Naive thymus-derived CD4-positive, alpha-beta T cell (primary cell): ENCODE measurements at regions of chr16 and their contacts with region 1.

Region 1: GRCh38 chr16:82229796-82230619 is 60.0 kb upstream of the MPHOSPH6 start:
- DNase-seq: peak; percentile 14 to 64 (median 35)
- ATAC-seq: peak; percentile 56
- H3K4me3 ChIP-seq: no peak overlapping the region
- H3K4me3 Mint-ChIP-seq: no peak overlapping the region
- H3K27ac ChIP-seq: no peak overlapping the region
- H3K27ac Mint-ChIP-seq: peak overlapping the region in 1 of 9 donors; percentile 1
- H3K4me1 ChIP-seq: no peaks in the 10 kb centered on the region
- H3K4me1 Mint-ChIP-seq: peaks cover 0 to 4% (median 0%) of the 10 kb centered on the region in 7 donors
- H3K27me3 ChIP-seq: no peaks in the 10 kb centered on the region
- H3K27me3 Mint-ChIP-seq: peaks cover 9 to 24% (median 22%) of the 10 kb centered on the region in 5 donors

Region 2: DNA sequence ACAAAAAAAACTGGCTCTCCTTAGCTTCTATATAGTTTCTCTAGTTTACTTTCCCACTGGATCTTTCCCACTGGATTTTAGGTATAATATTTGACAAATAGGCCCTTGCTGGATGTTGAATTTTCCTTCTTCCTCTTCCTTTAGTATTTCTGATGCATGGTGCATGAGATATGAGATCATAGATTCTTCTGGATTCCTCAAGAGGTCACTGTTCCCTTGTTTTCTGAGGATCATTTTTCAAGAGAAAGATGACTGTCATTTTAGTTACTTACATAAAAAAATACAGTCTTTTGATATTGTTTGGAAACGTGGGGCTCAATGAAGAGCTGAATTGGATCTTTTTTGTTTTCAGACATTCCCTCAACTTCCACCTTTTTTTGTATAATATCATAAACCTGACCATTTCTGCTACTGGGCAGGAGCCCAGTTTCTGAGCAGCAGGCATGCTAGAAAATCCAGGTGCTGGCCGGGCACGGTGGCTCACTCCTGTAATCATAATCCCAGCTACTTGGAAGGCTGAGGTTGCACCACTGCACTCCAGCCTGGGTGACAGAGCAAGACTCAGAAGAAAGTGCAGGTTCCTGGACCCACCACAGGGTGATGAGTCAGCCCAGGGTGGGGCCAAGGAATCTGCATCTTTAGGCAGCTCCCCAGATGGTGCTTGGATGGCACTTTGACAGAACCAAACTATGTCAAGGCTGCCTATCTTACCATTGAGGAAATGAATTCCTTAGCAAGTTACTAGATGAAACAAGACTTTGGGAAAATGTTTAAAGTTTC is 289.0 kb before region 1 on chr16:
- CTCF ChIA-PET with region 1: interaction called, 6 read pairs
- POLR2A ChIA-PET with region 1: no interaction called
- intact Hi-C with region 1: loop called in 1 of 2 experiments (anchors 1 kb)
- DNase-seq: peak in 6 of 9 donors; percentile 8 to 45 (median 20)
- ATAC-seq: no peak
- H3K4me3 ChIP-seq: no peak overlapping the region
- H3K4me3 Mint-ChIP-seq: no peak overlapping the region
- H3K27ac ChIP-seq: no peak overlapping the region
- H3K27ac Mint-ChIP-seq: peak overlapping the region in 2 of 9 donors; percentile 0
- H3K4me1 ChIP-seq: no peaks in the 10 kb centered on the region
- H3K4me1 Mint-ChIP-seq: peaks cover 0 to 3% (median 0%) of the 10 kb centered on the region in 7 donors
- H3K27me3 ChIP-seq: no peaks in the 10 kb centered on the region
- H3K27me3 Mint-ChIP-seq: peaks cover 0 to 15% (median 2%) of the 10 kb centered on the region in 5 donors

Region 3: DNA sequence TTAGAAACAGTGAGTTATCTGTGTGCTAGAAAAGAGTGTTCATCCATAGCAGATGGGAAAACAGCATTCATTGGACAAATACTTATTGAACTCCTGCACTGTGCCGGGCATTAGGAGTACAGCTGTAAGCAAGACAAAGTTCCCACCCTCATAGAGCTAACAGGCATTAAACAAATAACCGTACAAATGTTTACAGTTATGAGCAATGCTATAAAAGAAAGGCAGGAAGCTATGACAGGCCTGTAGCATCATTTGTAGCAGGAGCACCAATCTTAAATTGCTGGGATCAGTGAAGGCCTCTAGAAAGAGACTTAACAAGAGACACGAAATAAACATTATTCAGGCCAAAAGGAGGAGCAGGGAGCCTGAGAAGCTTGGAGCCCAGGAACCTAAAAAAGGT is 234.4 kb before region 1 on chr16:
- CTCF ChIA-PET with region 1: no interaction called
- POLR2A ChIA-PET with region 1: no interaction called
- intact Hi-C with region 1: loop called in 1 of 2 experiments (anchors 1 kb)
- DNase-seq: no peak
- ATAC-seq: no peak
- H3K4me3 ChIP-seq: no peak overlapping the region
- H3K4me3 Mint-ChIP-seq: no peak overlapping the region
- H3K27ac ChIP-seq: no peak overlapping the region
- H3K27ac Mint-ChIP-seq: peak overlapping the region in 1 of 9 donors; percentile 10
- H3K4me1 ChIP-seq: no peaks in the 10 kb centered on the region
- H3K4me1 Mint-ChIP-seq: peaks cover 0 to 15% (median 0%) of the 10 kb centered on the region in 7 donors
- H3K27me3 ChIP-seq: no peaks in the 10 kb centered on the region
- H3K27me3 Mint-ChIP-seq: no peaks in the 10 kb centered on the region

Region 4: DNA sequence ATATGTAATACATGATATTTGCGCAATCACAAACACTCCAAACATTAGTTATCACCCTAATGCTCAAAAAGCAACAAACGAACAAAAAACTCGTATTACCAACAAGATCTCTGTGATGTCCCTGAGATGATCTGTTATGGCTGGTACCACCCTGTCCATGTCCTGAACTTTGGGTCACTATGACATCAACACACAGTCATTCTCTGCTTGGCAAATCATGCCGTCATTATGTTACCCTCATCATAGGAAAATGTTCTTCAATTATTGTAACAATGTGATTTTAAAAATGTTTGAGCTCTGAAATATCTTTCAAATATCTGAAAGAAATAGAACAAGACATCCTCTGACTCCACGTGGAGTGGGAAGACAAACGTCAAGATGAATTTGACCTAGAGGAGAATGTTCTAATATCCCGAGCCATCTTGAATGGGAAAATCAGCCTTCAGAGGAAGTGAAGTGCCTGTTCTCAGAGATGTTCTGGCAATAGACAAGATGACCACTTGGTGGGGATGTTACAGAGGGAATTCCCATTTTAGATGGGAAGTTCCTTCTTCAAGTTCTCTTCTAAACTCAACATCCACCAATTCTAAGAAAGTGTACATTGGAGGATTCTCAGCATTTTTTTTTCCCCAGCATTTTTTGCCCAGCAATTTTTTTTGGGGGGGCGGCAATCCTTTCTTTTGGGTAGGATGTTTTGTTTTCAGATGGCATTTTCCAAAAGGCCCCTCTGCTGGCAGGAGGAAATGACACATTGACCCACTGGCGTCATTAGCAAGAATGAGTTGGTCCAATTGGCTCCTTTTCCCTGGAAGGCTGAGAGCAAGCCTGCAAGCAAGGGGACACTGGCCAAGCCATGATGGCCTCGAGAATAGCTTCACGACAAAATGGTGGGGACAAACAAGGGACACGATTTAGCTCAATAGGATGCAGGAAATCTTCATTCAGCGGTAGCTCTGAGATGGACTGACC is 198.6 kb before region 1 on chr16:
- CTCF ChIA-PET with region 1: no interaction called
- POLR2A ChIA-PET with region 1: no interaction called
- intact Hi-C with region 1: loop called (anchors 1 kb)
- DNase-seq: peak in 1 of 9 donors; percentile 11
- ATAC-seq: no peak
- H3K4me3 ChIP-seq: no peak overlapping the region
- H3K4me3 Mint-ChIP-seq: no peak overlapping the region
- H3K27ac ChIP-seq: no peak overlapping the region
- H3K27ac Mint-ChIP-seq: no peak overlapping the region
- H3K4me1 ChIP-seq: no peaks in the 10 kb centered on the region
- H3K4me1 Mint-ChIP-seq: no peaks in the 10 kb centered on the region
- H3K27me3 ChIP-seq: no peaks in the 10 kb centered on the region
- H3K27me3 Mint-ChIP-seq: peaks cover 7 to 29% (median 20%) of the 10 kb centered on the region in 5 donors

Region 5: DNA sequence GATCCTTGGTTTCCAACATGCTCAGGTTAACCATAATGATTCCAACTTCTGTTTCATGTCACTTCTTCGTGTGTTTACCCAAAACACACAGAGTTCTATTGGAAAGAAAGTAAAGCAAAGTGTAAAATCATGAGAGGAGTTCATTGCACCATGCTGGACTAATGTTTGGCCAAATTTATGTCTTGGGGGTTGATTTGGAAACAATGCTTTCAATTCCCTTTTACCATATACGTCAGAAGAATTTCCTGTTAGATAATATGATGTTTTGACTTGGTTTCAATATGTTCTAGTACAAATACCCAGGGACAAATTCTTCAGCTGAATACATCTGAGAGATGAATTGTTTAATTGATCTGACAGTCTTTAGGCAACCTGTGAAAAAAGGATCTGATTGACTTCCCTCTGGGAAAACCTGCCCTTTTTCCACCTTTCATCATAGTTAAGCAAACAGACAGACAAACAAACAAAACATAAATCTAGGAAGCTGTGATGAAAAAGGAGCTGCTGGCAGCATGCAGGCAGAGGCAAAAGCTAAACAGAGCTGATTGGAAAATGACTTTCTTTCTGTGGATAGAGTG is 34.0 kb before region 1 on chr16:
- CTCF ChIA-PET with region 1: no interaction called
- POLR2A ChIA-PET with region 1: no interaction called
- intact Hi-C with region 1: no loop called
- DNase-seq: no peak
- ATAC-seq: peak; percentile 12
- H3K4me3 ChIP-seq: no peak overlapping the region
- H3K4me3 Mint-ChIP-seq: no peak overlapping the region
- H3K27ac ChIP-seq: no peak overlapping the region
- H3K27ac Mint-ChIP-seq: peak overlapping the region in 1 of 9 donors; percentile 42
- H3K4me1 ChIP-seq: peaks cover 0 to 3% of the 10 kb centered on the region in 2 donors
- H3K4me1 Mint-ChIP-seq: peaks cover 11 to 13% (median 13%) of the 10 kb centered on the region in 7 donors
- H3K27me3 ChIP-seq: no peaks in the 10 kb centered on the region
- H3K27me3 Mint-ChIP-seq: peaks cover 0 to 4% (median under 1%) of the 10 kb centered on the region in 5 donors

Region 6: GRCh38 chr16:82414476-82414875 is 184.5 kb after region 1 on chr16:
- CTCF ChIA-PET with region 1: no interaction called
- POLR2A ChIA-PET with region 1: no interaction called
- intact Hi-C with region 1: no loop called
- DNase-seq: no peak
- ATAC-seq: no peak
- H3K4me3 ChIP-seq: no peak overlapping the region
- H3K4me3 Mint-ChIP-seq: no peak overlapping the region
- H3K27ac ChIP-seq: no peak overlapping the region
- H3K27ac Mint-ChIP-seq: no peak overlapping the region
- H3K4me1 ChIP-seq: no peaks in the 10 kb centered on the region
- H3K4me1 Mint-ChIP-seq: no peaks in the 10 kb centered on the region
- H3K27me3 ChIP-seq: no peaks in the 10 kb centered on the region
- H3K27me3 Mint-ChIP-seq: peaks cover 0 to 18% (median 7%) of the 10 kb centered on the region in 5 donors